ENCODE measurements at regions of chr6 and their contacts with region 1.

Region 1: DNA sequence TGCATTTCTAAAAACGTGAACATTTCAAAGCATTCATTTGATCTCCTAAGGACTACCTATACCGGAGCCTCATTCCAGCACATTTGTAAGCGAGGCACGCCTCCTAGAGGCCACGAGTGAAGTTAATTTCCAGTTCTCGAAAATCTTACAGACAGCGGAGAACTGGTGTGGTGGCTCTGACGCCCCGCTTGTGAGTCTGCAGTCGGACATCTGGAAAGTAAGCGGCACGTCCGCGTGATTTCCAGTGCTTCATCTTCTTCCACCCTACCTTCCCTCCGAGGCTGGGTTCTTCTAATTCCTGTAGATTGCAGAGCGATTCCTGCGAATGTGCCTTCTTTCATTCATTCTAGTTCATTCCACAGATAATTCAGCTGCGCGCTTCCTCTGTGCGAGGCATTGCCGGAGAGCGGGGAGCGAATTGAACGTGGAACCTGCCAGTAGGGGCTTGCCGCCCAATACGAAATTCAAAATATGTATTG is 810 bp upstream of the PRIM2 start:
- DNase-seq: peak; percentile 69
- H3K4me3 ChIP-seq: peak overlapping the region; percentile 87 to 98
- H3K27ac ChIP-seq: peak overlapping the region; percentile 83 to 99
- H3K4me1 ChIP-seq: peaks cover 8 to 37% of the 10 kb centered on the region in 2 experiments
- H3K27me3 ChIP-seq: no peaks in the 10 kb centered on the region
- CTCF ChIP-seq: peak; percentile 66
- EP300 ChIP-seq: no peak
- RAD21 ChIP-seq: peak; percentile 91

Region 2: DNA sequence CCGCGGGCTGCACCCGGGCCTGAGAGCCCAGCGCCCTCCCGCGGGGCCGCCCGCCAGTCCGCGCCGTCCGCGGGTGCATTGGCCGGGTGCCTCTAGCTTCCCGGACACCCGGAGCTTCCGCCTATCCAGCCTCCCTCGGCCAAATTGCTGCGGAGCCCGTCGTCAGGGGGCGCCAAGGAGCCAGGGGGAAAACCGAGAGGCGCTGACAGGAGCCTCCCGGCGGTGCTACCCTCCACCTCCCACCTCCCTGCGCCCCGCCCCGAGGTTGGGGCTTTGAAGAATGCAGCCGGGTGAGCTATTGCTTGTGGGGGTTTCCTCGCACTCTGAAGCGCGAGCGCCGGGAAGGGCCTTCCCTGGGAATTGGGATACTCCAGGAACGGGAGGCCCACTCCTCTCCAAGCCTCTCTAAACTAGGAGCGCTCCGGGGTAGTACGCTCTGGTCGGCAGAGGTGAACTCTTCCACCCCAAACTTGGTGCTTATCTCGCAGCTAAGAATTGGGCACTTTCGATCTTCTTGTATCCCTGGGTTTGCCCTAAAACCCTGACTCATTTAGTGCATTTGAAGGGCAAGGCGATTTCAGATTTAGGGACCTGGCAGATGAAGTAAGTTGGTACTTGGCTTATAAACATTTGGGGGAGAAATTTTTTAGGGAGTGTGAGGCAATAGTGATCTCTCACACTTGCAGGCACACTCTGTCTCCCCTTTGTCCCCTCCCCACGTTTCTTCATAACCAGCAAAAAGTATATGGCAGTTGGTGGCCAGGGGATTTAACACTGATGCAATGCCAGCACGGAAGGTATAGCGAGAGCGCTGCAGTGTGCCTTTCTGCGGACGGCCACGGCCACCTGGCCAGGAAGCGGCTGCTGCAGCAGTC is 361.2 kb before region 1 on chr6:
- CTCF ChIA-PET with region 1: interaction called, 14 read pairs
- POLR2A ChIA-PET with region 1: no interaction called
- DNase-seq: peak; percentile 67
- H3K4me3 ChIP-seq: peak overlapping the region; percentile 76 to 92
- H3K27ac ChIP-seq: peak overlapping the region; percentile 76 to 84
- H3K4me1 ChIP-seq: peaks cover 7 to 49% of the 10 kb centered on the region in 2 experiments
- H3K27me3 ChIP-seq: no peaks in the 10 kb centered on the region
- CTCF ChIP-seq: peak; percentile 87
- EP300 ChIP-seq: peak in 1 of 2 experiments; percentile 68; a peak in 1 of 4 replicates
- RAD21 ChIP-seq: peak; percentile 55

Region 3: DNA sequence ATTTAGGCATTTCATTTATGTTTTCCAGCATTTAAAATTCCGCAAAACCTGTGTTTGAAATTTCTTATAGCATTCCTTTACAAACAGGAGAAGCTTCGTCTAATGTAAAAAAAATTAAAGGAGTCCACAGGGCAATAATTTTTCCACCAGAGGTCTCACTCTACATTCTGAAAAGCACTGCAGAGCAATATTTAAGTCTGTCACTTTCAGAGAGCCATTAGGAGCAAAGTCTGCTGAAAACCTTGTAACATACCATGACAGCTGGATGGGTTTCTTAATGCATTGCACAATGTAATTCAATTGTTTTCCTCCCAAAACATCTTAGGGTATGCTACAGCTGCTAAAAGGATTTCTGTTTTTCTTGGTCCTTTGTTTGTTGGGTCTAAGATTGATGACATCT is 126.5 kb before region 1 on chr6:
- CTCF ChIA-PET with region 1: interaction called, 12 read pairs
- POLR2A ChIA-PET with region 1: no interaction called
- DNase-seq: no peak
- H3K4me3 ChIP-seq: no peak overlapping the region
- H3K27ac ChIP-seq: peak overlapping the region in 1 of 2 experiments; percentile 22; a peak in 1 of 4 replicates
- H3K4me1 ChIP-seq: no peaks in the 10 kb centered on the region; a peak in 1 of 4 replicates
- H3K27me3 ChIP-seq: no peaks in the 10 kb centered on the region
- CTCF ChIP-seq: peak; percentile 69
- EP300 ChIP-seq: no peak
- RAD21 ChIP-seq: peak; percentile 56

Region 4: DNA sequence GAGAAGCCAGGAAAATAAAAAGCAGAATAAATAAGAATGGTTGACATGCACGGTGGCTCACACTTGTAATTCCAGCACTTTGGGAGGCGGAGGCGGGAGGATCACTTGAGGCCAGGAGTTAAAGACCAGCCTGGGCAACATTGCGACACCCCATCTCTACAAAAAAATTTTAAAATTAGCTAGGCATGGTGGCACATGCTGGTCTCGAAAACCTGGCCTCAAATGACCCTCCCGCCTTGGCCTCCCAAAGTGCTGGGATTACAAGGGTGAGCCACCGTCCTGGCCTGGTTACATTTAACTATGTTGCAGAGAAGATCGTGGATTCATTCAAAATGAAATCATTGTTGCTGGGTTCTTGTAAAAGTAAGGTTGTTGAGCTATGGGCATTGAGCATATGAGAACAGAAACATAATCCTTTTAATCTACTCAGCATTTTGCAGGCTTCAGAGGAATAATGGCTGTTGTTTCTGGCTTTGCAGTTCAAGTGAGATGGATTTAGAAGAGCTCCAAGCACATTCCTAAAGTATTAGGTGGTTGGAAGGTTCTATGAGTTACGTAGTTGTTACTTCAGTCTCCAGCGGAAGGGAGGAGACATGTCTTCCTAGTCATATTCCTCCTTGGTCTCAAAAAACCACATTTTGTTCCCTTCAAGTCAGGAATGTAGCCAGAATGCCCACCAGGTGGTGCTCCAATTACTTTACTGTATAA is 48.9 kb before region 1 on chr6:
- CTCF ChIA-PET with region 1: interaction called, 29 read pairs
- POLR2A ChIA-PET with region 1: no interaction called
- DNase-seq: peak; percentile 42
- H3K4me3 ChIP-seq: no peak overlapping the region
- H3K27ac ChIP-seq: peak overlapping the region; percentile 5 to 95; a peak in 3 of 4 replicates
- H3K4me1 ChIP-seq: peaks cover 0 to 9% of the 10 kb centered on the region in 2 experiments; a peak in 3 of 4 replicates
- H3K27me3 ChIP-seq: no peaks in the 10 kb centered on the region
- CTCF ChIP-seq: peak; percentile 81
- EP300 ChIP-seq: peak in 1 of 2 experiments; percentile 80; a peak in 1 of 4 replicates
- RAD21 ChIP-seq: peak; percentile 72

Region 5: GRCh38 chr6:57303931-57304681 is 12.5 kb before region 1 on chr6:
- CTCF ChIA-PET with region 1: interaction called, 13 read pairs
- POLR2A ChIA-PET with region 1: no interaction called
- DNase-seq: peak; percentile 37
- H3K4me3 ChIP-seq: no peak overlapping the region
- H3K27ac ChIP-seq: peak overlapping the region; percentile 87 to 91; a peak in 3 of 4 replicates
- H3K4me1 ChIP-seq: peaks cover 3 to 31% of the 10 kb centered on the region in 2 experiments; a peak in 3 of 4 replicates
- H3K27me3 ChIP-seq: no peaks in the 10 kb centered on the region
- CTCF ChIP-seq: no peak
- EP300 ChIP-seq: peak in 1 of 2 experiments; percentile 63; a peak in 2 of 4 replicates
- RAD21 ChIP-seq: no peak